Vagina (tissue), 2 donors: ENCODE measurements at regions of chr17 and their contacts with region 1.

Region 1: DNA sequence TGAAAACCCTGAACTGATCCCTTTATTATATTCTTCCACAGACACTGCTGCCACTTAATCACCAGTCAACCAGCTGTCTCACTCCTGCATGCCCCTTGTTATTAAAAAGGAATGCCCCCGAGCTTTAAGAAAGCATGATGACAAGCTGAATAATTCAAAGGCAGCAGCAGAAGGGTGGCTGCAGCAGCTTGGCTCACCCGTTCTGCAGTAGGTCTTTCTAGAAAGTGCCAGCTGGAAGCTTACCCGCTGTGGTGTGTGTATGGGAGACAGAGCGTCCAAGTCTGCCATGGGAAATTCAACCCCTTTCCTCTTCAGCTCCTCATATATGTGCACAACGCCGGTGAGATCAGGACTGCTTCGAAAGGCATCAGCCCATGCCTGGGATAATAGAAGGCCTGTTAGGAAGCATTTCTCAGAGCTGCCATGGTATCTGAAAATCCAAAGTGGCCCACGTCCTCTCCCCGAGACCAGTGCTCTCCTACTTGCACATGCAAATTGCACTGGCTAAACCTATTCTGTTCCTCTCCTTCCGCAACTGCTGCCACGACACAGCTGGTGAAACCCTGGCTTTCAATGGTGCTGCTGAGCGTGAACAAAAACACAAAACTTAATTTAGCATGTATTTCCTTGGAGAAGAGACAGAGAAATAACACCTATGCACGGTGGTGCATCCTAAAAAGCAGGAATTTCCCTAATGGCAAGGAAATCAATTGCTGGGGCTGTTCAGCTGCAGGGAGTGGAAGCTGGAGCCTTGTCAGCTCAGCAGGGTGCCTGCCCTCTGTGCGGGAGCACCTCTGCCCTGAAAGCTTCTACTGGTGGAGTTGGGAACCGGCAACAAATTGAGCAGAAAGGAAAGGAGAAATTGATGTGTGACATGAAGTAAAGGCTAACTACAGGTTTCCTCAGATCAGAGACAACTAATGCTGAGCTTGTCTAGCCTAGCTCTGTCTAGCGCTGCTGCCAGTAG is 47.9 kb upstream of the SREBF1 start:
- DNase-seq: no peak
- H3K4me3 ChIP-seq: no peak overlapping the region
- H3K27ac ChIP-seq: no peak overlapping the region
- H3K4me1 ChIP-seq: peaks cover 23% of the 10 kb centered on the region
- H3K27me3 ChIP-seq: no peaks in the 10 kb centered on the region
- CTCF ChIP-seq: no peak
- POLR2A ChIP-seq: no peak

Region 2: GRCh38 chr17:17401271-17401781 is 483.3 kb before region 1 on chr17:
- intact Hi-C with region 1: loop called (anchors 5 kb)
- DNase-seq: no peak
- H3K4me3 ChIP-seq: no peak overlapping the region
- H3K27ac ChIP-seq: no peak overlapping the region
- H3K4me1 ChIP-seq: peaks cover 17% of the 10 kb centered on the region
- H3K27me3 ChIP-seq: no peaks in the 10 kb centered on the region
- CTCF ChIP-seq: no peak
- POLR2A ChIP-seq: no peak